AG04449 (cell line): ENCODE measurements at regions of chr10 and their contacts with region 1.

Region 1: GRCh38 chr10:101141616-101142532 is 10.8 kb downstream of the TLX1 start:
- DNase-seq: peak; percentile 16
- H3K4me3 ChIP-seq: no peak overlapping the region; the same call in 1 of the 2 replicates
- CTCF ChIP-seq: peak; percentile 95

Region 2: DNA sequence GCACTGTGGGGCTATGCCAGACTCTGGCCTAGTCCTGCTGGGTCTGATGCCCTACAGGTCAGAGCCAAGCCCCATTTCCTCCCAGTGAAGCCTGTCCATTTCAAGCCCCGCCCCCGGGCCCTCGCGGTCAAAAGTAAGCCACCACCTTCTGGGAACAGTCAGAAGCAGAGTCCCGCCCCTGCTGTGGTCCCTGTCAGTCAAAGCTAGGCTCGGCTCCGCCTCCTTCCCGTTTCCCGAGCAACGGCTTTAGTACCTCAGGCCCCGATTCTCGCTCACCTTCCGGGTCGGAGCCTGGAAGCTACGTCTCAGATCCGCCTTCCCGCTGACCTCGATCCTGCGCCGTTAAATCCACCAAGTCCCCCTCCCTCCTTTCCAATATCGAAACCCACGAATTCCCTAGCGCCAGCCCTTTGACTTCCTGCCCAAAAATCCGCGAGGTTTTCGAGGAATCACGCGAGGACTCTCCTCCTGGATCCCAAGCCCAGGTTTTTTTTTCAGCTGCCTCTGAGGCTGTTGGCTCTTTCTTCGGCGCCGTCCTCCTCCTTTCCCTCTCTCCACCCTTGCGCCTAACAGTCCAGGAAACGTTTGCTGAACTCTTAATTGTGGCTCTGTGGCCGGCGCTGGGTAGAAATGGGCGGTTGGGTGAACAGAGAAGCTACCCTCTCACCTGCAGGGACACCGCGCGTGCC is 99.1 kb before region 1 on chr10:
- CTCF ChIA-PET with region 1: interaction called, 47 read pairs
- POLR2A ChIA-PET with region 1: interaction called, 3 read pairs
- DNase-seq: no peak
- H3K4me3 ChIP-seq: peak overlapping the region; percentile 61
- CTCF ChIP-seq: no peak

Region 3: DNA sequence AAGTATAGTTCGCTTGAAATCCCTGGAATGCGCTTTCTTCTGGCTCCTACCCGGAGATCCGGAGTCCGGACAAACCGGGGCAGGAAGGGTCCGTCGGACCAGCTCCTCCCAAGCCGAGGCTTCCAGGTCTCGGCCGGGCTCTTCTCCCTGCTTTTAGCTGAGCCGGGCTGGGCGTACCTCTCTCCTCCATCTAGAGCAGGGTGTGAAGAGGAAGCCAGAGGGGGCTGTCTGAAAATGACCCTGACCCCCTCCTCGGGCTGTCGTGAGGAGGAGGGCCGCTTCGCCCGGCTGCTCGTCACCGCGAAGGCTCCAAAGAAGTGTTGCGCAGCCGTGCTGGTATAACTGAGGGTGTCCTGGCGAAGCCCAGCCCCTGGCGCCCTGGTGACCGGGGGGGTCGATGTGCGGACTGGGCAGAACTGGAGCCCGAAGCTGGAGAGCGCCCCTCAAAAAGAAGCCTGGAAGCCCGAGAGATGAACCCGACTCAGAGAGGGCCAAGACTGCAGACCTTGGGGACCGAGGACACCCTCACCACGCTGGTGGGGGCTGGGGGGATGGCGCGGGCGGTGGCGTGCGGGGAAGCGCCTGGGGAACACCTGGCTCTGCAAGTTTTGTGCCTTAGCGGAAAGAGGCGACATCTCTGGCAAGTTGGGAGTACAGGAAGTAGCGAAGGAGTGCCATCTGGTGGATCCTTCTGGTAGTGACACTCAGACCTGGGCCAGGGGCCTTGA is 74.4 kb before region 1 on chr10:
- CTCF ChIA-PET with region 1: interaction called, 38 read pairs
- POLR2A ChIA-PET with region 1: no interaction called
- DNase-seq: no peak
- H3K4me3 ChIP-seq: peak overlapping the region; percentile 56
- CTCF ChIP-seq: peak; percentile 79

Region 4: GRCh38 chr10:101110856-101111546 is 30.9 kb before region 1 on chr10:
- CTCF ChIA-PET with region 1: interaction called, 10 read pairs
- POLR2A ChIA-PET with region 1: no interaction called
- DNase-seq: no peak
- H3K4me3 ChIP-seq: no peak overlapping the region
- CTCF ChIP-seq: no peak

Region 5: GRCh38 chr10:101161494-101162299 is 19.8 kb after region 1 on chr10:
- CTCF ChIA-PET with region 1: interaction called, 113 read pairs
- POLR2A ChIA-PET with region 1: no interaction called
- DNase-seq: no peak
- H3K4me3 ChIP-seq: peak overlapping the region; percentile 51
- CTCF ChIP-seq: peak; percentile 94

Region 6: GRCh38 chr10:101353692-101354327 is 211.9 kb after region 1 on chr10 and contains the start of gene BTRC:
- CTCF ChIA-PET with region 1: no interaction called
- POLR2A ChIA-PET with region 1: no interaction called
- DNase-seq: peak; percentile 96
- H3K4me3 ChIP-seq: peak within 1 kb of the TSS; percentile 85
- CTCF ChIP-seq: no peak